HEK293 (cell line): ENCODE measurements at regions of chr19 and their contacts with region 1.

Region 1: GRCh38 chr19:46524308-46524707 is 28.6 kb upstream of the PNMA8B start:
- H3K4me3 ChIP-seq: no peak overlapping the region
- H3K27ac ChIP-seq: no peak overlapping the region
- H3K4me1 ChIP-seq: no peaks in the 10 kb centered on the region
- CTCF ChIP-seq: no peak

Region 2: DNA sequence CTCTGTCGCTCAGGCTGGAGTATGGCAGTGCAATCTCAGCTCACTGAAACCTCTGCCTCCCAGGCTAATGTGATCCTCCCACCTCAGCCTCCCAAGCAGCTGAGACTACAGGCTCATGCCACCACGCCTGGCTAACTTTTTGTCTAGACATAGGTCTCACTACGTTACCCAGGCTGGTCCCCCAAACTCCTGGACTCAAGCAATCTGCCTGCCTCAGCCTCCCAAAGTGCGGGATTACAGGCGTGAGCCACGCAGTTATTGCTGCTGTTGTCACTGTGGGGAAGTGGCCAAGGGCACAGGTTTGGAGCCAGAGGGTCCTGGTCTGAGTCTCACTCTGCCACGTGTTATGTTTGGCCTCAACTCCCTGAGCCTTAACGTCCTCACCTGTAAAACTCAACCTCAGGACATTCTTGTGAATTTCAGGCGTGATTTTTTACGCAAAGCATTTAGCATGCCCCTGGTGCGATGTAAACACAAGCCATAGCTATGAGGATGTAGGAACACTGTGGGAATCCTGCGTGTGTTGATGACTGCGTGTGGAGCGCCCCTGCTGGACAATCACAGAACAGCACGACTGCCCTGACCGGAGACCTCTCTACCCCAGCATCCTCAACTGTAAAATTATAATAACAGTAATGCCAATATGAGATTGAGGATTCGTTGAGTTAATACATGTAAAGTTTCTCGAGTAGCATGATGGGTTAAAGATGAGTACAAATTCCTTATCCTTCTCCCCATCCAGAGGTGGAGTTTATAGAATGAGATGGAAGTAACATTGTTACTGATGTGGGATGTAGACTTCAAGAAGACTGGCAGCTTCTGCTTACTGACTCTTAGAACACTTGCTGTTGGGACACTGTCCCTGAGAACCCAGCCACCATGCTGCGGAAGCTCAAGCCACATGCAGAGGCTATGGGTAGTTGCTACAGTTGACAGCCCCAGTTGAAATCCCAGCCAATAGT is 13.1 kb after region 1 on chr19:
- CTCF ChIA-PET with region 1: interaction called, 166 read pairs
- POLR2A ChIA-PET with region 1: no interaction called
- H3K4me3 ChIP-seq: no peak overlapping the region
- H3K27ac ChIP-seq: no peak overlapping the region
- H3K4me1 ChIP-seq: no peaks in the 10 kb centered on the region
- CTCF ChIP-seq: peak; percentile 62

Region 3: GRCh38 chr19:46542428-46543230 is 18.3 kb after region 1 on chr19:
- CTCF ChIA-PET with region 1: interaction called, 166 read pairs
- POLR2A ChIA-PET with region 1: no interaction called
- H3K4me3 ChIP-seq: no peak overlapping the region
- H3K27ac ChIP-seq: no peak overlapping the region
- H3K4me1 ChIP-seq: no peaks in the 10 kb centered on the region; the same call in 1 of the 2 replicates
- CTCF ChIP-seq: peak; percentile 75